ENCODE measurements at regions of chr1 and their contacts with region 1.

Region 1: GRCh38 chr1:63674238-63674864 is 81.1 kb downstream of the PGM1 start:
- DNase-seq: peak; percentile 72 to 84
- H3K4me3 ChIP-seq: no peak overlapping the region
- H3K27ac ChIP-seq: peak overlapping the region; percentile 50 to 55
- H3K4me1 ChIP-seq: peaks cover 0 to 17% (median 6%) of the 10 kb centered on the region in 4 donors
- H3K27me3 ChIP-seq: no peaks in the 10 kb centered on the region
- CTCF ChIP-seq: peak; percentile 66 to 75

Region 2: DNA sequence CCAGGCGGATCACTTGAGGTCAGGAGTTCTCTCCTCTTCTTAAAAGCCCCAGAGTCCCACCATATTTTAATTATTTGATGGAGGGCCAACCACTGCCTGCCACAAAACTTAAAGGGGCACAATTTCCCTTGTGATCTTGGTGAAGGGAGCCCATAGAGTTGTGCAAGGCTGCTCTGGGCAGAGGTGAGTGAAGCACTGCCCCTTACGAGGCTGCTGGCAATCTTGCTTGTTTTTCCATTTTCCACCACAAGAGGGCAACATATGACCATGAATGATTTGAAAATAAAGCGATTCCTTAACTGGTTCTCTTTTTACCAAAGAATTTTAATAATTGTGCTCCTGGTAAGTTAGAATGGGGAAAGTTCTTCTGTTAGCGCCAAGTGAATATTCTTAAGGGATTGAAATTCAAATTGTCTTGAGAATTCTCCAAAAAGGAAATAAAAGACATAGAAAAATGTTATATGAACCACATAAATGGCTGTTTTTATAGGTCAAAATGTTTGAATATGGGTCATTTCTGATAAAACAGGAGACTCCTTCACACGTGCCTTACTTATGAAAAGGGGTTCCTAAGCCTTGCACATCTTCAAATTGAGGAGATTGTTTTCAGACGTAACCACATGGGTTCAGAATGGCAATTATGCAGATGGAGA is 58.5 kb before region 1 on chr1:
- intact Hi-C with region 1: loop called (anchors 10 kb)
- DNase-seq: peak in 1 of 2 donors; percentile 76
- H3K4me3 ChIP-seq: no peak overlapping the region
- H3K27ac ChIP-seq: no peak overlapping the region
- H3K4me1 ChIP-seq: peaks cover 0 to 45% (median 7%) of the 10 kb centered on the region in 4 donors
- H3K27me3 ChIP-seq: no peaks in the 10 kb centered on the region
- CTCF ChIP-seq: peak; percentile 70 to 89

Region 3: GRCh38 chr1:64231153-64231552 is 556.8 kb after region 1 on chr1:
- intact Hi-C with region 1: loop called (anchors 5 kb)
- DNase-seq: no peak
- H3K4me3 ChIP-seq: no peak overlapping the region
- H3K27ac ChIP-seq: no peak overlapping the region
- H3K4me1 ChIP-seq: no peaks in the 10 kb centered on the region
- H3K27me3 ChIP-seq: no peaks in the 10 kb centered on the region
- CTCF ChIP-seq: no peak

Region 4: GRCh38 chr1:64246294-64246917 is 572.1 kb after region 1 on chr1:
- intact Hi-C with region 1: loop called (anchors 2 kb)
- DNase-seq: no peak
- H3K4me3 ChIP-seq: no peak overlapping the region
- H3K27ac ChIP-seq: no peak overlapping the region
- H3K4me1 ChIP-seq: peaks cover 0 to 6% (median 0%) of the 10 kb centered on the region in 4 donors
- H3K27me3 ChIP-seq: no peaks in the 10 kb centered on the region
- CTCF ChIP-seq: peak; percentile 79 to 87

Measured in tibial artery (tissue), 4 donors.